ENCODE measurements at regions of chr5 and their contacts with region 1.

Region 1: DNA sequence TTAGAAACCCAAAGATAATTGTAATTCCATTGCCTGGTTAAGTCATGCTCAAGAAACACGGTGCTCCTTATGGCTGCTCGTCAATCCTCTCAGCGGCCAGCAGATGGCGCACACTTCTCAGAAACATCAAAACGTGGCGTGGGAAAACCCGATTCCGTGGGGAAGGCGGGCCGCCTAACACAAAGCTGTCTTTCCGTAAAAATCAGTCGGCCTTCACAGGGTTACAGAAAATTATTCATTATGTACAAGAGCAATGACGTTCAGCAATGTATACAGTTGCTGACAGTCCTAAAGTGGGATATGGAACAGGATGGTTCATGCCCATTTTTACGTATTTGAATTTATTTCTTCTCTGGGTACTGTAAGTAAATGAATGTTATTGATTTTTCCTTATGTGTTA is 83.5 kb downstream of the PDE4D start:
- DNase-seq: peak; percentile 66
- H3K4me3 Mint-ChIP-seq: peak overlapping the region; percentile 62
- H3K27ac Mint-ChIP-seq: no peak overlapping the region
- H3K4me1 Mint-ChIP-seq: peaks cover 11% of the 10 kb centered on the region
- H3K27me3 Mint-ChIP-seq: peaks cover 16% of the 10 kb centered on the region
- CTCF ChIP-seq: peak; percentile 83

Region 2: DNA sequence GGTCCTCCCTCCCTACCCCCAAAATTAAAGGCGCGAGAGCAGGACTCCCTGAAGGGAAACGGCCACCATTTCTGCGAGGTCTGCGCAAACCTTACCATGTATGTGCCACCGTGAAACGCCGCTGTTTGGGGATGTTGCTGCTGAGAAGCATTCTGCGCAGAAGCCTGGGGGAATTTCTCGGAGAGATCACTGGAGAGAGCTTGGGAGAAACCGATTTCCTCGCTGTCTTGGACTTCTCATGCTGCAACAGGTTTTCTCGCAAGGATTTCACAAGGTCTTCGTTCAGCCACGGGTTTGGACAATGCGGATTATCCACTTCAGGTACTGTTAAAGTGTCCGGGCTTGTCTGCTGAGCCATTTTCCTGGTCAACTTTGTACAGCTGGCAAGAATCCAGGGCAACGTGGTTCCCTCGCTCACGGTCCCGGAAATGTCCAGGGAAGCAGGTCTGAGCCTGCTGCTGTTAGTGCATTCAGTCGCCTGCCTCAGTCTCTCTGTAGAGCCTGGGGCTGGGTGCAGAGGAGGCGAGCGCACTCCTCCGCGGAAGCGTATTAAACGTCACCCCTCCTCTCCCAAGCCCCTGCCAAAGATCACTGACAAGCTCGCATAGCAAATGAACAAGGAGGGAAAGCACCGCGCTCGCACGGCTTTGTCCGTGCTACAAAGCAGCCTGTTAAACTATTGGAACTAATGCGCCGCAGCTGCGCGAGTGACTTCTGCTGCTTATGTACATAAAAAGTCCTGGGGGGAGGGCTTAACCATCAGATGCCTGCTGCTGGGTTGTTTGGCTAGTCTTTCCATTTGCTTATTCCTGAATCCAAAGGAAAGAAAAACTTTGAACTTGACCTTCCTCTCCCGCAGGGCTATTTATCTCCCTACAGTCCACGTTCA is 41.6 kb before region 1 on chr5:
- CTCF ChIA-PET with region 1: no interaction called
- POLR2A ChIA-PET with region 1: no interaction called
- intact Hi-C with region 1: no loop called
- DNase-seq: peak; percentile 94
- H3K4me3 Mint-ChIP-seq: peak overlapping the region; percentile 98
- H3K27ac Mint-ChIP-seq: peak overlapping the region; percentile 98
- H3K4me1 Mint-ChIP-seq: peaks cover 57% of the 10 kb centered on the region
- H3K27me3 Mint-ChIP-seq: no peaks in the 10 kb centered on the region
- CTCF ChIP-seq: no peak

Region 3: DNA sequence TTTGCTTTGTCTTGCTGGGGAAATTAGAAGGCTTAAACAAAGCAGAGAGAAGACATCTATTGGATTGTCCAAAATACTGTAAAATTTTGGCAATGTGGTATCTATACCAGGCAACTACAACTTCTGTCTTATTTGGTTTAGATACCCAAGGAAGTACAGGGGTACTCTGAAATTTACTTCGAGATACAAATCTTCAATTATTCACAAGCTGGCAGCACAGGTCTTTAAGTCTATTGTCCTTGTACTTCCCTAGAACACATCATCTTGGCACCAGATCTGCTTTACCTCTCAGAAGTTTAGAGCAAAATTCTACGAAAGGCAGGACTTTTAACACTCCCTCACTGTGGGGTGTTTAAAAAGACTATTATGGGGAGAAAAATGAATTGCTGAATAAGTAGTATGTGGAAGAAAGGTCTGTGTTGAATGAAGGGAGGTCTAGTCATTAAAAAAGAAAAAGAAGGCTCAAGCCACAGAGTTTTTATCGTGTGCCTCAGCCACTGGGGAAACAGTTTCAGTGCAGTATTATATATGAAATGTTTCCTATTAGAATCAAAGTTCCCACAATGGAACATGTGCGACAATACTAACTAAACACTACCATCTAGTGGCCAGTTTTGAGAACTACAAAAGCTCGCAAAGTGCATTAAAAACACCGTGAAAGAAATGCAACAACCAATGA is 10.2 kb before region 1 on chr5:
- CTCF ChIA-PET with region 1: interaction called, 20 read pairs
- POLR2A ChIA-PET with region 1: no interaction called
- intact Hi-C with region 1: no loop called
- DNase-seq: peak; percentile 77
- H3K4me3 Mint-ChIP-seq: no peak overlapping the region
- H3K27ac Mint-ChIP-seq: no peak overlapping the region
- H3K4me1 Mint-ChIP-seq: no peaks in the 10 kb centered on the region
- H3K27me3 Mint-ChIP-seq: no peaks in the 10 kb centered on the region
- CTCF ChIP-seq: peak; percentile 67

Region 4: GRCh38 chr5:59923465-59923864 is 113.4 kb after region 1 on chr5:
- CTCF ChIA-PET with region 1: interaction called, 19 read pairs
- POLR2A ChIA-PET with region 1: no interaction called
- intact Hi-C with region 1: loop called (anchors 1 kb)
- DNase-seq: no peak
- H3K4me3 Mint-ChIP-seq: no peak overlapping the region
- H3K27ac Mint-ChIP-seq: no peak overlapping the region
- H3K4me1 Mint-ChIP-seq: no peaks in the 10 kb centered on the region
- H3K27me3 Mint-ChIP-seq: peaks cover 91% of the 10 kb centered on the region
- CTCF ChIP-seq: no peak

Region 5: GRCh38 chr5:60287174-60287771 is 477.2 kb after region 1 on chr5:
- CTCF ChIA-PET with region 1: interaction called, 11 read pairs
- POLR2A ChIA-PET with region 1: no interaction called
- intact Hi-C with region 1: loop called (anchors 1 kb)
- DNase-seq: peak; percentile 78
- H3K4me3 Mint-ChIP-seq: no peak overlapping the region
- H3K27ac Mint-ChIP-seq: no peak overlapping the region
- H3K4me1 Mint-ChIP-seq: no peaks in the 10 kb centered on the region
- H3K27me3 Mint-ChIP-seq: peaks cover 99% of the 10 kb centered on the region
- CTCF ChIP-seq: peak; percentile 77

Region 6: DNA sequence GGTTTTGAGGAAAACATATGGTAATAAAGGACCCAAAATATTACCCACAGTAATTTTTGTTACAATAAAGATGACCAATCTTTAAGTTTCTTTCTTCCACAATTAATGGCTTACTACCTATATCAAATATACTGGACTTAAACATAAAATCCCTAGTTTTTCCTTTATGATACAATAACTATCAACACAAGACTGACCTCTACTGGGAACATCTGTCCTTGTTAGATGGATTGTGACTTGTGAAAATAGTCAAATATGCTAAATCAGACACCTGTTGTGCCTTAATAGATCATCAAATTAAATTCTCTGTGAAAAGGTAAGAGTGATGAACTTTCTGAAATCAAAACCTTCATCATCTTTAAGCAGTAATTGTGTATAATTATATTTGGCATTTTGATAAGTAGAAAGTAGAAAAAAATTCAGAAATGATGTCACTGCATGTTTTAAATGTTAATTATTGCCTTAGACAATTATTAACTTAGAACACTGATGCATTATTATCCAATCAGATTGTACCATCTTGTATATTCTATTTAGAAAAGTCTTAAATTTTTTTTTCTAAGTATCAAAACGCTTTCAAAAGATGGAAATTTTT is 776.4 kb after region 1 on chr5:
- CTCF ChIA-PET with region 1: interaction called, 4 read pairs
- POLR2A ChIA-PET with region 1: no interaction called
- intact Hi-C with region 1: loop called (anchors 1 kb)
- DNase-seq: peak; percentile 8
- H3K4me3 Mint-ChIP-seq: no peak overlapping the region
- H3K27ac Mint-ChIP-seq: no peak overlapping the region
- H3K4me1 Mint-ChIP-seq: no peaks in the 10 kb centered on the region
- H3K27me3 Mint-ChIP-seq: no peaks in the 10 kb centered on the region
- CTCF ChIP-seq: peak; percentile 11

Region 7: DNA sequence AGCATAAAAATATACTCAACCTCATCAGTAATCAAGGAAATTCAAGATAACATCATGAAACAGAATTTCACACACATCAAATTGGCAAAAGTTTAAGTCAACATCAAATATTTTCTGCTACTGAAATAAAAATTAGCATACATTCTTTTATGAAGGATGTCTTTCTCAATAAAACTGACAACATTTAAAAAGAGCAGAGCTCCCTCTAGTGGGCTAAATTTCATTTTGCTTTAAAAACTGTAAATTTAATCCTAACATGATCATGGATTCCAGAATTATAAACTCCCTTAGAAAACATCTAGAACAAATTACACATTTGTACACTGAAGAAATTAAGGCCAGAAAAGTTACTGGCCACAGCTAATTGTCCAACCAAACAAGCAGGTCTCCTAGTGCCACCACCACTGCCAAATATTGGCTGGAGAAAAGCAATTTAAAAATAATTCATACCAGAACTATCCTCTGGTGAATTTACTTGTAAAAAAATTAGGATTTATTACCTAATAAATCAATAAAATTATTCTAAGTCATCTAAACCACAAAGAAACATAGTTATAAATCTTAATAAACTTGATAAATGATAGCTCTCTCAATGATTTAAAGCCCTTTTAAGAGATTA is 858.8 kb after region 1 on chr5:
- CTCF ChIA-PET with region 1: interaction called, 22 read pairs
- POLR2A ChIA-PET with region 1: interaction called, 3 read pairs
- intact Hi-C with region 1: loop called (anchors 5 kb)
- DNase-seq: peak; percentile 58
- H3K4me3 Mint-ChIP-seq: no peak overlapping the region
- H3K27ac Mint-ChIP-seq: no peak overlapping the region
- H3K4me1 Mint-ChIP-seq: no peaks in the 10 kb centered on the region
- H3K27me3 Mint-ChIP-seq: no peaks in the 10 kb centered on the region
- CTCF ChIP-seq: peak; percentile 19